ENCODE measurements at regions of chr1 and their contacts with region 1.

Region 1: DNA sequence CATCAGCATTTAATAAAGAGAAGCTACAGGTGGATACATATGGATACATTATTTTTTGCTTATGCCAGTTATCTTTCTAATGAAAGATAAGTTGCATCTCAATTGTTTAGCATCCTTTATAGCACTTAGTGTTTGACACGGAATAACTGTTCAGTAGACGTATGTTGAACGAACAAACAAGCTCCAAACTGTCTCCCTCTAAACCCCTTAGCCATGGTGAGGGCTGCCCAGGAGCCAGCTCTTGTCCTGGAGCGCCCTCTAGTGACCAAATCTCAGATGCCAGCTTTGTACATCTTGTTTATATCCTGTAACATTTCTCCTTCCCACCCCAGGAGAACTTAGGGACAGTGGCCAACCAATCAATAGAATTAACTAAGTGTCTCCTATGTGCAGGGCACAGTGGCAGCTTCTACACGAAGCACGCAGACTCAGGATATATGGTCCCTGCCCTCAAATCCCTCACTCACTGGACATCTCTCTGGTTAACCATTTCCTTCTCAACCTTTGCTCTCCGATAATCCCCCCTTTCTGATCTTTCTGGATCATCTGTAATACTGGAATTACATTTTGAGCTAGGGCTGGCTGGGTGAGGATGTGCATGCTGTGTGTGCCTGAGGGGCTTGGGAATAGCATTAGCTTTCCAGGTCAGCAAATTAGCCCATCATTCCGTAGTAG is 22.9 kb downstream of the KCNA10 start:
- DNase-seq: peak; percentile 91
- H3K4me3 Mint-ChIP-seq: no peak overlapping the region
- H3K27ac Mint-ChIP-seq: peak overlapping the region; percentile 1
- H3K4me1 Mint-ChIP-seq: no peaks in the 10 kb centered on the region
- H3K27me3 Mint-ChIP-seq: no peaks in the 10 kb centered on the region

Region 2: DNA sequence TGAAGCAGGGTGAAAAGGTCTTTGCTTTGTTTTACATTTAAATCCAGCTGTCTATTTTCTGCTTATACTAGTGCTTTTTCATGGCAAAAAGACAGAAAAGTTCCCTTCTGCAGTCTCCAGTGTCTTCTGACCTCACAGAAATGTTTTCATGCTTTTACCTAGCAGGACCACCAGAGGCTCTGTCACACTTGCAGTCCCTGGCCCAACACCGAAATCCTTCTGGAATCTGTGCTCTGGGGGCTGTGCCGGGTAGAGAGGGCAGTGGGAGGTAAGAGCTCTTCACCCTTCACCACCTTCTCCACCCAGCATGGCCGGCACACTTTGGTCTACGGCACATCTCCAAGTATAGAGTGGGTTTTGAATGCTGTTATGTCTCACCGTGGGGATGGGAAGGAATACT is 897.4 kb before region 1 on chr1:
- CTCF ChIA-PET with region 1: no interaction called
- intact Hi-C with region 1: no loop called
- DNase-seq: no peak
- H3K4me3 Mint-ChIP-seq: no peak overlapping the region
- H3K27ac Mint-ChIP-seq: no peak overlapping the region
- H3K4me1 Mint-ChIP-seq: peaks cover 20% of the 10 kb centered on the region
- H3K27me3 Mint-ChIP-seq: no peaks in the 10 kb centered on the region

Region 3: GRCh38 chr1:110196917-110197765 is 298.9 kb before region 1 on chr1:
- CTCF ChIA-PET with region 1: interaction called, 71 read pairs
- intact Hi-C with region 1: loop called (anchors 1 kb)
- DNase-seq: peak; percentile 65
- H3K4me3 Mint-ChIP-seq: no peak overlapping the region
- H3K27ac Mint-ChIP-seq: no peak overlapping the region
- H3K4me1 Mint-ChIP-seq: no peaks in the 10 kb centered on the region
- H3K27me3 Mint-ChIP-seq: no peaks in the 10 kb centered on the region

Region 4: GRCh38 chr1:110243574-110243973 is 252.5 kb before region 1 on chr1:
- CTCF ChIA-PET with region 1: no interaction called
- intact Hi-C with region 1: no loop called
- DNase-seq: peak; percentile 78
- H3K4me3 Mint-ChIP-seq: no peak overlapping the region
- H3K27ac Mint-ChIP-seq: peak overlapping the region; percentile 16
- H3K4me1 Mint-ChIP-seq: peaks cover 24% of the 10 kb centered on the region
- H3K27me3 Mint-ChIP-seq: no peaks in the 10 kb centered on the region

Region 5: DNA sequence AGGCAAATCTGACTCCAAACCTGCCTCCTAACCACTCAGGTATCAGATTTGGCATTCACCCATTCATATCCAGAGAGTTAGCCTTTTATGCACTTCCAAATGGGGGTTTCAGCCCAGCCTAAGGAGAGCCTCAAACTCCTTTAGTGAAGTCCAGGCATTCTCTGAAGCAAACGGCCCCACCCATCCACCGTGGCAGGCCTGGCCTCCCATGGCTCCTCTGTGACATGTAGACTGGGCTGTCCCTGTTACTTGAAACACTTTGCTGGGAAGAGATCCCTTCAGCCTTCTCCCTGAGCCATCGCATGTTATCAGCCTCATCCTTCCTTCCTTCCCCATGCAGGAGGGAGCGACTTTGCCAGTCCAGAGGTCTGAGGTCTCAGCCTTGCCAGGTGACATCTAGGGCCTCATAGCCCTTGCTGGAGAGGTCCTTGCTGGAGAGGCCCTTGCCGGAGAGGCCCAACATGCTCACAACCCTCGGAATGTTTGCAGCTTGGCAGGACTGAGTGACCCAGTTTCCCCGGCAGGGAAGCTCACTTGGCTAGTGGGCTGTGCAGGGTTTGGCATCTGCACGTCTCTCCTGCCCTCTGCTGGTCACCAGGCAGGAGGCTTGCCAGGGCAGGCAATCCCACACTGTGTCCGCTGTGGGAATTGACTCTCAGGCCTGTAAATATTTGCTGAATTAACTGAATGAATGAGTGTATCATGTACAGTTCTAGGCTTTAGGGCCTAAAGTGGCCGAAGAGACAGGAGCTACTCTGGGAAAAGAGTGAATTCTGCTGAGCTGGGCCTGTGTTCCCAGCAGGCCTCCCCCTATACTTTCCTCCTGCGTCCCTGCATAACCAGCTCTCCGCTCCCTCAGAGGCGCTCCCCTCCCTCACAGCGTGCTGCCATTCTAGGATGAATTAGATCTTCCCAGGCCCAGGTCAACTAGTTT is 183.6 kb before region 1 on chr1:
- CTCF ChIA-PET with region 1: interaction called, 10 read pairs
- intact Hi-C with region 1: loop called (anchors 5 kb)
- DNase-seq: peak; percentile 81
- H3K4me3 Mint-ChIP-seq: no peak overlapping the region
- H3K27ac Mint-ChIP-seq: no peak overlapping the region
- H3K4me1 Mint-ChIP-seq: no peaks in the 10 kb centered on the region
- H3K27me3 Mint-ChIP-seq: no peaks in the 10 kb centered on the region

Region 6: GRCh38 chr1:110412576-110412975 is 83.5 kb before region 1 on chr1:
- CTCF ChIA-PET with region 1: interaction called, 46 read pairs
- intact Hi-C with region 1: loop called (anchors 1 kb)
- DNase-seq: peak; percentile 70
- H3K4me3 Mint-ChIP-seq: no peak overlapping the region
- H3K27ac Mint-ChIP-seq: no peak overlapping the region
- H3K4me1 Mint-ChIP-seq: peaks cover 7% of the 10 kb centered on the region
- H3K27me3 Mint-ChIP-seq: no peaks in the 10 kb centered on the region

Region 7: DNA sequence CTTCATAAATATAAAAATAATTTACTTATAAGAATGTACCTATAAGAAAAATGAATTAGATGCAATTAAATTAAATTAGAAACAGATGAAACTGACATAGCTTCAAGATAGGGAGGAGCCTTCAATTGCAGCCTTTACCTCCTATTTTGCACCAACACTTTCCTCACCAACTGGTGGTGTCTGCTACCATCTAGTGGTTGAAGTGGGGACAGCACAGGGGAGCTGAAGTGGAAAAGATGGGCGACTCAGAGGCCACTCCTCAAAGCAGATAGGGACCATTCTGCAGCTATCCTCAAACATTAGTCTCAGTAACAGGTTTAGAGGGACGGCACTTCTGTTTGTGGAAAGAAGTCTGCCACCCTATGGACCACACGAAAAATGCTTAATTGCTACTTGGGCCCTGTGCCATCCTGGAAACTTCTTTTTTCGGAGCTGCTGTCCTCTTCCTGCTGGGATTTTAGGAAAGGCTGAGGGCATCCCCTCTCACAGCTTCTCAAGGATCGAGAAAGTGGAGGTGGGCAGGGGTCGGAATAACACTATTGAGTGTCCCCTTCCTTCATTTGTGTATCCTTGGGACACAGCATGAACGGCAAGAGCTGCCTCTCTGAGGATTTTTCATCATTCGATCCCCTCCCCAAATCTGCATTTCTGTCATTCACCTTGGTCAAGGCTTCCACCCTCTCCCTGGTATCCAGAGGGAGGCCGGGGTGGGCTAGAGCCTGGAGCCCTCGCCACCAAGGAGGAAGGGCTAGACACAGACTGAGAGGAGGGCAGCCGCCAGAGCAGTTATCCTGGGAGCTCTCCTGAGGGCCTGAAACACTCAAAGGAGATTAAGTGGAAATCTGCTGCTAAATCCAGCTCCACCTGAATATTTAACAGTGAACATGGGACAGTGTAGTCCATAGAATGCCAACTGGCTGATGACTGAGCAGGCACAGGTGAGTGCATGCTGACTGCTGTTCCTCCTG is 35.5 kb before region 1 on chr1:
- CTCF ChIA-PET with region 1: interaction called, 76 read pairs
- intact Hi-C with region 1: loop called (anchors 2 kb)
- DNase-seq: peak; percentile 93
- H3K4me3 Mint-ChIP-seq: no peak overlapping the region
- H3K27ac Mint-ChIP-seq: no peak overlapping the region
- H3K4me1 Mint-ChIP-seq: no peaks in the 10 kb centered on the region
- H3K27me3 Mint-ChIP-seq: no peaks in the 10 kb centered on the region

Region 8: GRCh38 chr1:110524311-110525251 is 28.5 kb after region 1 on chr1:
- CTCF ChIA-PET with region 1: interaction called, 11 read pairs
- intact Hi-C with region 1: no loop called
- DNase-seq: peak; percentile 70
- H3K4me3 Mint-ChIP-seq: no peak overlapping the region
- H3K27ac Mint-ChIP-seq: no peak overlapping the region
- H3K4me1 Mint-ChIP-seq: no peaks in the 10 kb centered on the region
- H3K27me3 Mint-ChIP-seq: peaks cover 12% of the 10 kb centered on the region

Measured in activated naive CD4-positive, alpha-beta T cell treated with anti-CD3 and anti-CD28 coated beads for 36 hours (primary cell).